Naive thymus-derived CD4-positive, alpha-beta T cell (primary cell): ENCODE measurements at regions of chr1 and their contacts with region 1.

Region 1: DNA sequence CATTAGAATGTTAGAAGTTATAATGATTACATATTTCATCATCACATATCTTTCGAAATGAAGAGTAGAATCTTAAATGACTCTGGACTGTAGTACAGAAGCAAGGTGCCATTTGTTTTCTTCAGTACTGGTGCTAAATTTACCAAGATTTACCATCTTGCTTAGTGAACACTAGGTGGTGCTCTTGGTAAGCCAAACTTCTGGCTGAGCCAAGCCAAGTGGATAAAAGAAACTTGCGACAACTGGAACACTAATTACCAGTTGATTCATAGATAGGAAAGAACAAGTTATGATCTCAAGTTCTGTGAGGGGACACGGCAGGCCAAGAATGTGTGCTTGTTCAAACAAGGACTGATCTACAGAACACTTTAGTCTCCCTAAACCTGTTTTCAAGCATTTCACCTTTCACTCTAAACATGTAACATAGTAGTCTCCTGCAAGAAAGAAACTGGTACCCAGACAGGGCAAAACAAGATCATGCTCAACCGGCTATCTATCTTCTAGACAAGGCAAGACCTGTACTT is 19.8 kb downstream of the SPRTN start:
- DNase-seq: peak in 7 of 9 donors; percentile 36 to 64 (median 55)
- ATAC-seq: peak; percentile 91
- H3K4me3 ChIP-seq: no peak overlapping the region
- H3K4me3 Mint-ChIP-seq: no peak overlapping the region
- H3K27ac ChIP-seq: no peak overlapping the region
- H3K27ac Mint-ChIP-seq: peak overlapping the region in 7 of 9 donors; percentile 3 to 63 (median 27)
- H3K4me1 ChIP-seq: peaks cover 0 to 3% of the 10 kb centered on the region in 2 donors
- H3K4me1 Mint-ChIP-seq: peaks cover 2 to 15% (median 7%) of the 10 kb centered on the region in 7 donors
- H3K27me3 ChIP-seq: no peaks in the 10 kb centered on the region
- H3K27me3 Mint-ChIP-seq: no peaks in the 10 kb centered on the region

Region 2: GRCh38 chr1:231550448-231550781 is 192.5 kb after region 1 on chr1:
- CTCF ChIA-PET with region 1: interaction called, 5 read pairs
- POLR2A ChIA-PET with region 1: interaction called, 3 read pairs
- intact Hi-C with region 1: loop called (anchors 1 to 2 kb)
- DNase-seq: peak in 6 of 9 donors; percentile 12 to 38 (median 22)
- ATAC-seq: peak; percentile 59
- H3K4me3 ChIP-seq: no peak overlapping the region
- H3K4me3 Mint-ChIP-seq: no peak overlapping the region
- H3K27ac ChIP-seq: no peak overlapping the region
- H3K27ac Mint-ChIP-seq: peak overlapping the region in 2 of 9 donors; percentile 13 to 51
- H3K4me1 ChIP-seq: no peaks in the 10 kb centered on the region
- H3K4me1 Mint-ChIP-seq: peaks cover 13 to 50% (median 33%) of the 10 kb centered on the region in 7 donors
- H3K27me3 ChIP-seq: no peaks in the 10 kb centered on the region
- H3K27me3 Mint-ChIP-seq: no peaks in the 10 kb centered on the region

Region 3: DNA sequence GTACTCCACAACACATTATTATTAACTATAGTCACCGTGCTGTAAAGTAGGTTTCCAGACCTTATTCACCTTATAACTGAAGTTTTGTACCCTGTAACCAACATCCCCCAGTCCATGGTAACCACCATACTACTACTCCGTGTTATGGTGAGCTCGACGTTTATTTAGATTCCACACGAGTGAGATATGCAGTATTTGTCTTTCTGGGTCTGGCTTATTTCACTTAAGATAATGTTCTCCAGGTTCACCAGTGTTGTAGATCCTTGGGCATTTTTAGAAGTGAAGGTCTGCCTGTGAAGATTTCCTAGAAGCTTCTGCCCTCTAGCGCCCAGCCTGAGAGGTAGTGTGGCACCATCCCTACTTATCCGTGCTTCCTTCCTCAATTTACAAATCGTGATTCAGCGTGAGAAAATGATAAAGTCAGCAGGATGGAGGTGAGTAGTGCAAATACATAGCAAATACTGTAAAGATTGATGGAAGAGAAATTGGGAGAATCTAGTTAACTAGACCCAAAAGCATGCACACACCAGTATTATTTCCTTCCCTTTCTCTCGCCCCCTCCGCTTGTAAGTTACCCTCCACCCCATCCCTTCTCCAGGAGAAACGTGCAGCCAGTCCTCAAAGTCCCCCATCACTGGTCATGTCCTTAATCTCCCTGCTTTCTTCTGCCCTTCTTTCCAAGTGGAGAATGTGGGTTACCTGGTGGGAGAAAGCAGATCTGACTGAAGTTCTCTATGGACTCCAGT is 232.7 kb after region 1 on chr1:
- CTCF ChIA-PET with region 1: interaction called, 13 read pairs
- POLR2A ChIA-PET with region 1: no interaction called
- intact Hi-C with region 1: loop called (anchors 1 kb)
- DNase-seq: peak in 5 of 9 donors; percentile 24 to 43 (median 31)
- ATAC-seq: peak; percentile 83
- H3K4me3 ChIP-seq: no peak overlapping the region
- H3K4me3 Mint-ChIP-seq: no peak overlapping the region
- H3K27ac ChIP-seq: no peak overlapping the region
- H3K27ac Mint-ChIP-seq: no peak overlapping the region
- H3K4me1 ChIP-seq: no peaks in the 10 kb centered on the region
- H3K4me1 Mint-ChIP-seq: peaks cover 3 to 10% (median 6%) of the 10 kb centered on the region in 7 donors
- H3K27me3 ChIP-seq: no peaks in the 10 kb centered on the region
- H3K27me3 Mint-ChIP-seq: peaks cover 0 to 6% (median 0%) of the 10 kb centered on the region in 5 donors

Region 4: DNA sequence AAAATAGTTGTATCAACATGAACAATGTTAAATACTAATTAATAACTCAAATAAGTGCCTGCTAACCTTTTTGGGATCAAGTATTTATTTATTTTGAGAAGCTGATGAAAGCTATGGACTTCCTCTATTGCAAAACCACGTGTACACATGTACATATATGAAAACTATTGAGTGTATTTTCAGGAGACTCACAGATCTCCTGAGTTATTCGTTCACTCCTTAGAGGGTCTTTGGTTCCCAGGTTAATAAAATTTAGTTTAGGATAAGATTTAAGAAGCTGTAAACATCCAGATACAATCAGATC is 399.2 kb after region 1 on chr1:
- CTCF ChIA-PET with region 1: no interaction called
- POLR2A ChIA-PET with region 1: no interaction called
- intact Hi-C with region 1: loop called in 1 of 2 experiments (anchors 5 kb)
- DNase-seq: no peak
- ATAC-seq: peak; percentile 54
- H3K4me3 ChIP-seq: no peak overlapping the region
- H3K4me3 Mint-ChIP-seq: peak overlapping the region in 1 of 10 donors; percentile 14
- H3K27ac ChIP-seq: no peak overlapping the region
- H3K27ac Mint-ChIP-seq: no peak overlapping the region
- H3K4me1 ChIP-seq: no peaks in the 10 kb centered on the region
- H3K4me1 Mint-ChIP-seq: peaks cover 0 to 13% (median 0%) of the 10 kb centered on the region in 7 donors
- H3K27me3 ChIP-seq: no peaks in the 10 kb centered on the region
- H3K27me3 Mint-ChIP-seq: no peaks in the 10 kb centered on the region

Region 5: DNA sequence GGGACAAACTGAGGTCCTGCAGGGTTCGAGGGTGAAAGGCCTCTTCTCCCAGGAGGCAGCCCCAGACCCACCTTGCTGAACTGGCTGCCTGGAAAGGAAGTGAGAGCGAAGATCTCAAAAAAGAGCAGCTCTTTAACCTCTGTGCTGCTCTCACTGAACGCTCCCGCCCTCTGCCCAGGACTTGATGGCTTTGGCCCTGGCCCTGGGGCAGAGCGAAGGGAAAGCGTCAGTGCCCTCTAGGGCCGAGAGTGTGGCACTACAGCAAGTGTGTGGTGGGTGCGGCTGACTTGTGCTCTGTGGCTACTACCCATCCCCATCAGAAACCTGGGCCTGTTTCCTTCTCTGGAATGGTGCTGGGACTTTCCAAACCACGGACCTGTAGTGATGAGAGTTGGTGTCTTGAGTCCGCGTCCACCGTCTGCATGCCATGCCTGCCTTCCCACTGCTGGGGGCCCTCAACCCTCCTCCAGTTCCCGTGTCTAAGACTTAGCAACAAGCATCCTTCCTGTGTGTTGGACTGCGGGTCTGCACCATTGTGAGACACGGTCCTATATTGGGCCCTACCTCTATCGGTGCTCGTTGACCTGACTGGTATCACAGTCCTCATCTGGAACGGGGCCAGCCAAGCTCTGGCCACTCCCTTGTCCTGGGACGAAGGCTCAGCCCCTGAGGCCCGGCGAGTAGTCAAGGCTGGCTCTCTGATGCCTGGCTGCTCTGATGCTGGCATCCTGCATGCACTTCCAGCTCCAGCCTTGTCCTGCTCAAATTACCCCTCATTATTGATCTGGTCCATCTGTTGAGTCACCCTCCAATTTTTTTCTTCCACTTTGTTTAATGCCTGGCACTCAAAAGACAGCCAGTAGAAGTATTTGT is 449.0 kb after region 1 on chr1:
- CTCF ChIA-PET with region 1: no interaction called
- POLR2A ChIA-PET with region 1: no interaction called
- intact Hi-C with region 1: loop called in 1 of 2 experiments (anchors 2 kb)
- DNase-seq: peak in 6 of 9 donors; percentile 6 to 25 (median 12)
- ATAC-seq: peak; percentile 79
- H3K4me3 ChIP-seq: no peak overlapping the region
- H3K4me3 Mint-ChIP-seq: no peak overlapping the region
- H3K27ac ChIP-seq: no peak overlapping the region
- H3K27ac Mint-ChIP-seq: no peak overlapping the region
- H3K4me1 ChIP-seq: no peaks in the 10 kb centered on the region
- H3K4me1 Mint-ChIP-seq: peaks cover 0 to 12% (median 0%) of the 10 kb centered on the region in 7 donors
- H3K27me3 ChIP-seq: no peaks in the 10 kb centered on the region
- H3K27me3 Mint-ChIP-seq: no peaks in the 10 kb centered on the region